Thyroid gland (tissue), 4 donors: ENCODE measurements at regions of chr1 and their contacts with region 1.

Region 1: GRCh38 chr1:204363335-204364124 is 3.8 kb upstream of the PLEKHA6 start:
- DNase-seq: peak; percentile 66 to 68
- H3K4me3 ChIP-seq: peak overlapping the region in 2 of 3 donors; percentile 21 to 37
- H3K27ac ChIP-seq: peak overlapping the region in 2 of 3 donors; percentile 10 to 74
- H3K4me1 ChIP-seq: peaks cover 6% of the 10 kb centered on the region in 2 donors
- H3K27me3 ChIP-seq: no peaks in the 10 kb centered on the region
- CTCF ChIP-seq: peak; percentile 92 to 99 (median 97)
- POLR2A ChIP-seq: no peak

Region 2: GRCh38 chr1:204162231-204163074 is 201.1 kb before region 1 on chr1:
- intact Hi-C with region 1: loop called (anchors 2 kb)
- DNase-seq: peak; percentile 85 to 87
- H3K4me3 ChIP-seq: no peak overlapping the region
- H3K27ac ChIP-seq: no peak overlapping the region
- H3K4me1 ChIP-seq: no peaks in the 10 kb centered on the region
- H3K27me3 ChIP-seq: no peaks in the 10 kb centered on the region
- CTCF ChIP-seq: peak; percentile 96 to 99 (median 98)
- POLR2A ChIP-seq: no peak

Region 3: GRCh38 chr1:204213668-204214662 is 149.6 kb before region 1 on chr1 and contains the start of gene GOLT1A:
- intact Hi-C with region 1: loop called (anchors 5 kb)
- DNase-seq: peak; percentile 63 to 67
- H3K4me3 ChIP-seq: no peak within 1 kb of the TSS
- H3K27ac ChIP-seq: no peak within 1 kb of the TSS
- H3K4me1 ChIP-seq: peaks cover 0 to 11% of the 10 kb centered on the region in 2 donors
- H3K27me3 ChIP-seq: no peaks in the 10 kb centered on the region
- CTCF ChIP-seq: peak in 5 of 6 experiments; percentile 28 to 58 (median 49)
- POLR2A ChIP-seq: no peak
- total RNA-seq, gene GOLT1A: 0.45 TPM in 1 of 4 donors, not detected in the others